ENCODE measurements at regions of chr16 and their contacts with region 1.

Region 1: GRCh38 chr16:50806099-50807062 is 64.5 kb downstream of the CYLD start:
- DNase-seq: peak; percentile 80 to 90
- ATAC-seq: peak; percentile 90 to 95 (median 93)
- H3K4me3 ChIP-seq: peak overlapping the region; percentile 46
- H3K27ac ChIP-seq: peak overlapping the region; percentile 28
- H3K4me1 ChIP-seq: peaks cover 7% of the 10 kb centered on the region
- H3K27me3 ChIP-seq: no peaks in the 10 kb centered on the region
- CTCF ChIP-seq: peak; percentile 93

Region 2: DNA sequence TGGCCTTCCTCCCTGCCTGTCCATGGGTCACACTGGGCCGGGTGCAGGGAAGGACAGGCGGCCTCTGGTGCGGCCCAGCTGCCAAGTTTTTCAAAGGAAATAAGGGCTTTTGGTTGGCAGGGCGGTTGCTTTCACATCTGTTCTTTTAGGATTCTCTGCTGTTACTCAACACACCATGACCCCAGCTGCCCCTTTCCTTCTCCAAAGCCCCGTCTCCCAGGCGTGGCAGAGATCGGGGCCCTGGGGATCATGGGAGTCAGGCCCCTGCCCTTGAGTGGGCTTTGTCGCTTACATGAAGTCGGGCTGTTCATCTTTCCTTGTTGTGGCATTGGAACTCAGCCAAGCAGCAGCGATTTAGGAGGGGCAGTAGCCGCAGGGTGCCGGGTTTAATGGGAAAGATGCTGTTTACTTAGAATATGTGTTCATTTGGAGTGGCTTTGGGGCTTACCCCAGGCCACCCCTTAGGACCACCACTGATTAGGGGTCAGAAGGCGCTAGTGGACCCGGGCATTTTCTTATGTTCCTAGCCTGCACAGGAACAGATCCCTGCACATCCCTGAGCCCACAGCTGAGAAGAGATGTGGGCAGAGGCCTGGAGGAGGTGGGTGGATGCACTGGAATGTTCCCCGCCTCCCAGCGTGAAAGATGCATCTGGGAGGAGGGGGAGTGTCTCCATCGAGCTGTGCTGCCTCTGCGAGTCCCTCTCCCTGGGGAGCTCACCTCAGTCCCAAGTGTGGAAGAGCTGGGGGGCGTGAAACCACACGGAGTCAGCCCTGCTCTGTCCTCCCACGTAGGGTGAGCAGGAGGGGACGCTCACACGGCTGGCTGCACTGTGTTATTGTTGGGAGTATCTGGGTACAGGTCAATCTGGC is 546.8 kb before region 1 on chr16:
- intact Hi-C with region 1: loop called in 1 of 2 experiments (anchors 10 kb)
- DNase-seq: peak; percentile 69 to 81
- ATAC-seq: peak; percentile 23 to 82 (median 59)
- H3K4me3 ChIP-seq: no peak overlapping the region
- H3K27ac ChIP-seq: no peak overlapping the region
- H3K4me1 ChIP-seq: no peaks in the 10 kb centered on the region
- H3K27me3 ChIP-seq: no peaks in the 10 kb centered on the region
- CTCF ChIP-seq: no peak

Region 3: GRCh38 chr16:50548125-50548908 is 258.1 kb before region 1 on chr16 and contains the start of gene NKD1:
- intact Hi-C with region 1: loop called in 1 of 2 experiments (anchors 10 kb)
- DNase-seq: peak; percentile 75 to 79
- ATAC-seq: peak; percentile 87 to 96 (median 92)
- H3K4me3 ChIP-seq: peak within 1 kb of the TSS; percentile 74
- H3K27ac ChIP-seq: no peak within 1 kb of the TSS
- H3K4me1 ChIP-seq: no peaks in the 10 kb centered on the region
- H3K27me3 ChIP-seq: peaks cover 0 to 30% (median 4%) of the 10 kb centered on the region in 3 donors
- CTCF ChIP-seq: no peak
- total RNA-seq, gene NKD1: 0.22 to 0.45 (median 0.34) TPM

Region 4: DNA sequence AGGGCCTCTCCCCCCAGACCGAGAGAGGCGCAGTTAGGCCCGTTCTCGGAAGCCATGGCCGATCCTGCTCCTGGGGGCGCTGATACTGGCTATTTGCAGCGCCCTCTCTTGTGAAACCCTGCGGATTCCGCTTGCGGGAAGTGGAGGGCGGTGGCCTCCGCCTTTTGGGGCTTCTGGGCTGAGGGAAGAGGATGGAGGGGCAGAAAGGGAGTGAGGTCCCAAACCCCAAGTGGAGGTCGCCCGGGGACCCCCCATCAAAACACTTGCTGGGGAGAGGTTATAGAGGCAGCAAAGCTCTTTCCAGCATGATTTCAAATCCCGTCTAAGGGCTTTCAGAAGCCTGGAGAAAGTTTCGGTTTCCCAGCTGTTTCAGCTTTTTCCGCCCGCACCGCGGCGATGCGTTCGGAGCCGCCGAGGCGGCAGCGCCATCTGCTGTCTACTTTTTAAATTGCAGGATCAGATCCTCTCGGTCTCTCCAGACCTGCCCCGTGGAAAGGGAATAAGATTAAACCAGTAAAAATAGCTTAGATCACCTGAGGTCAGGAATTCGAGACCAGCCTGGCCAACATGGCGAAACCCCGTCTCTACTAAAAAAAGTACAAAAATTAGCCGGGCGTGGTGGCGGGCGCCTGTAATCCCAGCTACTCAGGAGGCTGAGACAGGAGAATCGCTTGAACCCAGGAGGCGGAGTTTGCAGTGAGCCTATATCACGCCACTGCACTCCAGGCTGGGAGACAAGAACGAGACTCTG is 141.1 kb before region 1 on chr16:
- intact Hi-C with region 1: loop called (anchors 2 to 5 kb)
- DNase-seq: peak; percentile 74 to 85
- ATAC-seq: peak; percentile 63 to 88 (median 76)
- H3K4me3 ChIP-seq: peak overlapping the region; percentile 68
- H3K27ac ChIP-seq: peak overlapping the region; percentile 60
- H3K4me1 ChIP-seq: peaks cover 16% of the 10 kb centered on the region
- H3K27me3 ChIP-seq: no peaks in the 10 kb centered on the region
- CTCF ChIP-seq: peak; percentile 88

Region 5: GRCh38 chr16:50709053-50709684 is 97.2 kb before region 1 on chr16:
- intact Hi-C with region 1: no loop called
- DNase-seq: no peak
- ATAC-seq: no peak
- H3K4me3 ChIP-seq: no peak overlapping the region
- H3K27ac ChIP-seq: no peak overlapping the region
- H3K4me1 ChIP-seq: peaks cover 16% of the 10 kb centered on the region
- H3K27me3 ChIP-seq: no peaks in the 10 kb centered on the region
- CTCF ChIP-seq: no peak

Region 6: DNA sequence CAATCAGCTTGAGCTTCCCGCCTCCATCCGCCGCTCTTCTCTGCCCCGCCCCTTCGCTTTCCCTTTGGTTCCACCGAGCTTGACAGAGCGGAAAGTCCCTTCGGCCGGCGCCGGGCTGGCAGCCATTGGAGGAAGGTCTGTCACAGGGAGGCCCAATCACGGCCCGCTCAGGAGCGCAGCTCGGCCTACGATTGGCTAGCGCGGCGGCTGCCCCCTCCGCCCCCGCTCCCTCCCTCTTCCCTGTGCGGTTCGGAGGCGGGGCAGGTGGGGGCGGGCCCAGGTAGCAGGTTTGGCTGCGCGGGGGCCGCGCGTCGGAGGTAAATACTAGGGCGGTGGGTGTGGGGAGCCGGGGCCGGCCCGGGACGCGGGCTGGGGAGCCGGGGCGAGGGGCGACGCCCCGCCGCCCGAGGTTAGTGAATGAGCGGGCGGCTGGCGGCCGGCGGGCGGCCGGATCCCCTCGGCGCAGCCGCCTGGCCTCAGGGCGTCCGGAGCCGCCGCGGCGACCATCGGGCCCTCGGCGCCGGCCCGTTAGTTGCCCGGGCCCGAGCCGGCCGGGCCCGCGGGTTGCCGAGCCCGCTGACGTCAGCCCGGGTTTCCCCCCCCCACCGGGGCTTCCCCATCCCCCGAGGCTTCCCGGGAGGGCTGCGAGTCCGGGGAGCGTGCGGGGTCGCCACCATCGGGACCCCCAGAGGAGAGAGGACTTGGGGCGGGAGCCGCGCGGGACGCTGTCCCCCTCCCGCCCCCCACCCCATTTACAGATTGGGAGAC is 64.4 kb before region 1 on chr16 and contains the start of gene CYLD:
- intact Hi-C with region 1: loop called in 1 of 2 experiments (anchors 5 kb)
- DNase-seq: peak; percentile 100
- ATAC-seq: peak; percentile 97 to 99 (median 98)
- H3K4me3 ChIP-seq: peak within 1 kb of the TSS; percentile 90
- H3K27ac ChIP-seq: peak within 1 kb of the TSS; percentile 94
- H3K4me1 ChIP-seq: peaks cover 24% of the 10 kb centered on the region
- H3K27me3 ChIP-seq: no peaks in the 10 kb centered on the region
- CTCF ChIP-seq: no peak
- total RNA-seq, gene CYLD: 46.9 to 103 (median 61.9) TPM